ENCODE measurements at regions of chr17 and their contacts with region 1.

Region 1: DNA sequence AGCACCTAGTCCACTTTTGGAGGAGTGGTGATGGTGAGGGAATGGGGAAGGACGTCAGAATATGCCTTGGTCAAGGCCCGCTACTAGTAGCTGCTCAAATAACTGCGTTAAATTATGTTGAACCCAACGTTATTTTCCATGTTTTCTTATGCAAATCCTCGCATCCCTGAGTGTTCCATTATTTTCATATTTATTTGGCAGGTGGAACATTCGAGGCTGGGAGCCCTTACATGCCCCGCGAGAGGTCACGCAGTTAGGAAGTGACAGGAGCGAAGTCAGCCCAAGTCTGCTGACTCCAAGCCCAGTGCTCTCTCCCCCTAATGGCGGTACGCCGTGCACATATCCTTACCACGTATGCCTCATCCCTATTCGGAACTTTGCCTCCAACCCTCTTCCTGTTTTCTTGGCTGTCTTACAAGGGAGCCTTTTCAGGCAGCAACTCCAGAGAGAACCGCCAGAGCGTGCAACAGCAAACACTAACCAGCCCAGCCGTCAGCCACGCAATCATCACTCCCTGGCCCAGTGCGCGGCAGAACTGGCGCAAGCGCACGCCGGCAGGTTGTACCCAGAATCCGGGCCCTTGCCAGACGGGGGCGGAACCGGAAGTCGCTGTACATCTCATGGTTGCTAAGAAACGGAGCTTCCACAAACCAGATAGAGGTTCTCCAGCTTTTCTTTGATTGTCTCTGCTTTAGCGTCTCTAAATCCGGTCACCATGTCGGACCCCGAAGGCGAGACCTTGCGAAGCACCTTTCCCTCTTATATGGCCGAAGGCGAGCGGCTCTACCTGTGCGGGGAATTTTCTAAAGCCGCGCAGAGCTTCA is at the start of gene ODAD4:
- DNase-seq: peak; percentile 97
- total RNA-seq, gene ODAD4: 0.54 TPM

Region 2: DNA sequence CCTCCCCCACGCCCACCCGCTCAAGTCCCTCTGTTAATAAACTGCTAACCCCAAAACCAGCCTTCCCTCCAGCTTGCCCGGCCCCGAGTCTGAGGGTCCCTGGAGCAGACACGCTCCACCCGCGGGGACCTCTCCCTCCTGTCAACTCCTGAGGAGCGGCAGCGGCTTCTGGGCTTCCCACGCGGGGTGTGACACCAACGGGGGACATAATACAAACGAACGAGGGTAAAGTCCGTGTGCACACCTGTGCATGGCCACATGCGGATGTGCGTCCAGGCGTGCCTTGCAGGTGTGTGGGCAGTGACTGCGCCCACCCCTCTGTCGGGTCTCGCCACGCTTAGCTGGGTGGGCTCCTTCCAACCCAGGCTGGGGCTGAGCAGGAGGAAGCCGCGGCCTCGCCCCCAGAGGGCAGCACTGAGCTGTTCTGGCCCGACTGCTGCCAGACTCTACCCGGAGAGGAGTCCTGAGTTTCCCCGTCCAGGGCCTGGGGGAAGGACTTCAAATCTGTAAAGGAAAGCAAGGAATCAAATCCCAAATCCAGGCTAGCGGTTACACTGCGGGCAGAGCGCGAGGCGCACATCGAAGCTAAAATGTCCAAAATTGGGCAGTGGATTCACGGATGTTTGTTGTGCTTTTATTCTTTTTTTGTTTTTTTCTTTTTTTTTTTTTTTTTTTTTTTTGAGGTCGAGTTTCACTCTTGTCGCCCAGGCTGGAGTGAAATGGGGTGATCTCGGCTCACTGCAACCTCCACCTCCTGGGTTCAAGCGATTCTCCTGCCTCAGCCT is 281.6 kb before region 1 on chr17:
- intact Hi-C with region 1: no loop called
- DNase-seq: peak; percentile 92

Region 3: DNA sequence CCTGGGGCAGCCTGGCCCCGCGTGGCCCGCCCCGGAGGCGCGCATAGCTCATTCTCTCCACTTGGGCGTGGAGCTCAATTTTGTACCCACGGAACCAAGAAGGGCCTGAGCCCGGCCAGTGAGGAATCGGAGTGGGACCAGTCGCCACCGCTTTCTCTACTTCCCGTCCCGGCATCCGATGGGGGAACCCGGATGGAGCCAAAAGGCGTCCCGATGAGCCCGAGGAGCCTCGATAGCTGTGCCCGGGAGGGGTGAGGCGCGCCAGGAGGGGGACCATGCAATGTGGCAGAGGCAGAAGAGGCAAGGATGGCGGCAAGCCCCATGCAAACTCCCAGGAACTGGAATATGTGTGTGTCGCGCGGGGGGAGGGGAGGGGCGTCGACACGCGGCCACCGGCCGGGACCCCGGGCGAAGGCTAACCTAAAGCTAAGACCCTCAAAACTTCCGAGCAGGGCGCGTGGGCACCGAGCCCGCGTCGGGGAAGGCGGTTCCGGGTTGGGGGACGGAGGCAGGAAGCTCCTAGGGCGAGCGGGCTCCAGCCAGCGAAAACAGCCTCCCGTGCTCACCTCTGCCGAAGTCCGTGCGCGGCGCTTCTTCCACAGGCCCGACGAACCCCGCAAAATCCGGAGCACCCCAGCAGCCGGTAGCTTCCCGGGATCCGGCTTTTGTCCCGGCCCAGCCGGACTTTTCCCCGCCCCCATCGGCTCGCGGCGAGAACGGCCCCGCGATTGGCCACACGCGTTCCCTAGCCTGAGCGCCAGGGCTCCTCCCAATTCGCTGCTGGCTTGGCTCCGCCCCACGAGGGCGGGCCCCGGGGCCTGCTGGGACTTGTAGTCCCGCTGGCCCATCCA is 11.7 kb before region 1 on chr17 and contains the start of gene ACLY:
- intact Hi-C with region 1: loop called (anchors 1 kb)
- DNase-seq: peak; percentile 99
- total RNA-seq, gene ACLY: 33.6 TPM